ENCODE measurements at regions of chr6 and their contacts with region 1.

Region 1: GRCh38 chr6:48765352-48765961 is 654.5 kb upstream of the PTCHD4 start:
- DNase-seq: peak; percentile 78
- H3K4me3 ChIP-seq: no peak overlapping the region
- H3K27ac ChIP-seq: no peak overlapping the region
- H3K4me1 ChIP-seq: peaks cover 6% of the 10 kb centered on the region
- H3K27me3 ChIP-seq: no peaks in the 10 kb centered on the region
- CTCF ChIP-seq: peak; percentile 70

Region 2: GRCh38 chr6:48087448-48087847 is 678.0 kb before region 1 on chr6:
- CTCF ChIA-PET with region 1: interaction called, 5 read pairs
- POLR2A ChIA-PET with region 1: no interaction called
- intact Hi-C with region 1: loop called (anchors 5 kb)
- DNase-seq: peak; percentile 39
- H3K4me3 ChIP-seq: no peak overlapping the region
- H3K27ac ChIP-seq: no peak overlapping the region
- H3K4me1 ChIP-seq: peaks cover 3% of the 10 kb centered on the region
- H3K27me3 ChIP-seq: no peaks in the 10 kb centered on the region
- CTCF ChIP-seq: peak; percentile 56

Region 3: DNA sequence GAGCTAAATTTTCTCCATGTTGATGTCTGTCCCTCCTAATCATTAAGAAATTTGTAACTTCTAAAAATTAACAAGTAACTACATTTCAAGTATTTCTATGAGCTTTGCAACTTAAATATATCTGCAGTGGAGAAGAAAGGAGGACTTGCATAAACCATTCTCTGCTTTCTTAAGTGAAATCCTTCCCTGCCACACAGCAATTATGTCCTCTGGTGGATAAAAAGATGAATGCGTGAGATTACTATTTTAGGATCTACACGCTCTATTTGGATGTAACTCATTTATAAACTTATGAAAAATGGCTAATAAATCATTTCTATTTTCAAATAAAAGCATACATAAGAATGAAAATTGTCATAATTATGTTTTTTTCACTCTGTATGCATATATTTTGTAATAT is 316.5 kb before region 1 on chr6:
- CTCF ChIA-PET with region 1: no interaction called
- POLR2A ChIA-PET with region 1: no interaction called
- intact Hi-C with region 1: no loop called
- DNase-seq: peak; percentile 4
- H3K4me3 ChIP-seq: no peak overlapping the region
- H3K27ac ChIP-seq: no peak overlapping the region
- H3K4me1 ChIP-seq: no peaks in the 10 kb centered on the region
- H3K27me3 ChIP-seq: no peaks in the 10 kb centered on the region
- CTCF ChIP-seq: peak; percentile 42

Region 4: GRCh38 chr6:48542188-48542587 is 223.3 kb before region 1 on chr6:
- CTCF ChIA-PET with region 1: no interaction called
- POLR2A ChIA-PET with region 1: no interaction called
- intact Hi-C with region 1: loop called (anchors 10 kb)
- DNase-seq: no peak
- H3K4me3 ChIP-seq: no peak overlapping the region
- H3K27ac ChIP-seq: no peak overlapping the region
- H3K4me1 ChIP-seq: no peaks in the 10 kb centered on the region
- H3K27me3 ChIP-seq: no peaks in the 10 kb centered on the region
- CTCF ChIP-seq: no peak

Region 5: DNA sequence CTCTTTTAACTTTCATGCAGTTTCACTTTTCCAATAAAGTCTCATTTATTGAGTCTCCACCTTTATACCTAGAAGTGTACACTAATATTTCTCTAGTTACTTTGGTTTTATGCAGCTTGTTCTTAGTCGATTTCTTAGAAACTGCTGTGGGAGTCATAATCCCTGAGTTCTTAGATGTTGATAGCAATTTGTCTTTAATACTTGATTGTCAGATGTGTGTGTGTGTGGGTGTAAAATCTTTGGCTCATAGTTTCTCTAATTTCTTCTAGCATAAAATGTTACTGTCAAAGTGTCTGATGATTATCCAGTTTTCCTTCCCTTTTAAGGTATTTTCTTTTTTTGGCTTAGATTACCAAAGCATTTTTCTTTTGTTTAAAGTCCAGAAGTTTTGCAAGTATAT is 180.6 kb before region 1 on chr6:
- CTCF ChIA-PET with region 1: no interaction called
- POLR2A ChIA-PET with region 1: no interaction called
- intact Hi-C with region 1: no loop called
- DNase-seq: no peak
- H3K4me3 ChIP-seq: no peak overlapping the region
- H3K27ac ChIP-seq: no peak overlapping the region
- H3K4me1 ChIP-seq: no peaks in the 10 kb centered on the region
- H3K27me3 ChIP-seq: no peaks in the 10 kb centered on the region
- CTCF ChIP-seq: no peak

Region 6: DNA sequence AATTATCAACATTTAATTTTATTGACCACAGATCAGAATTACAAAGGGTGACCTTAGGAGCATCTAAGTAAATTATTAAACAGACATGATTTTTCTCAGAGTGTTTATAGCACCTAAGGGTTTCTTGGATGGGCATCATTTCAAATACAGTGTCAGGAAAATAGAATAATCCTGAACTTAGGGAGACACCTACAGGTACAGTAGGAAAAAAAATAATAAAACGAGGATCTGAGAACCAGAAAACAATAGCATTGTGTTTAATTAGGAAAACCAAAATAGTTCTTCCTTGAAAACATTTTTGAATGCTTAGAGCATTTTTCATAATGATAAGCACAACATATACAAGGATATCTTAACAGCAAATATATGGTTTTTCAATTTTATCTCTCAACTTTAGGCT is 658.4 kb after region 1 on chr6:
- CTCF ChIA-PET with region 1: no interaction called
- POLR2A ChIA-PET with region 1: no interaction called
- intact Hi-C with region 1: loop called (anchors 10 kb)
- DNase-seq: peak; percentile 30
- H3K4me3 ChIP-seq: no peak overlapping the region
- H3K27ac ChIP-seq: no peak overlapping the region
- H3K4me1 ChIP-seq: no peaks in the 10 kb centered on the region
- H3K27me3 ChIP-seq: no peaks in the 10 kb centered on the region
- CTCF ChIP-seq: peak; percentile 49

Measured in A673 (cell line).